CD8-positive, alpha-beta T cell (primary cell): ENCODE measurements at regions of chr17 and their contacts with region 1.

Region 1: GRCh38 chr17:49361902-49362722 is at the start of gene ZNF652:
- DNase-seq: peak; percentile 91 to 98 (median 95)
- ATAC-seq: peak; percentile 59
- H3K4me3 ChIP-seq: peak within 1 kb of the TSS; percentile 50 to 90
- H3K4me3 Mint-ChIP-seq: peak within 1 kb of the TSS; percentile 94
- H3K27ac ChIP-seq: peak within 1 kb of the TSS; percentile 58 to 75
- H3K27ac Mint-ChIP-seq: peak within 1 kb of the TSS; percentile 97
- H3K4me1 ChIP-seq: peaks cover 46% of the 10 kb centered on the region
- H3K4me1 Mint-ChIP-seq: peaks cover 68% of the 10 kb centered on the region
- H3K27me3 ChIP-seq: no peaks in the 10 kb centered on the region
- H3K27me3 Mint-ChIP-seq: no peaks in the 10 kb centered on the region
- CTCF ChIP-seq: no peak
- total RNA-seq, gene ZNF652: 28.1 to 28.6 TPM

Region 2: DNA sequence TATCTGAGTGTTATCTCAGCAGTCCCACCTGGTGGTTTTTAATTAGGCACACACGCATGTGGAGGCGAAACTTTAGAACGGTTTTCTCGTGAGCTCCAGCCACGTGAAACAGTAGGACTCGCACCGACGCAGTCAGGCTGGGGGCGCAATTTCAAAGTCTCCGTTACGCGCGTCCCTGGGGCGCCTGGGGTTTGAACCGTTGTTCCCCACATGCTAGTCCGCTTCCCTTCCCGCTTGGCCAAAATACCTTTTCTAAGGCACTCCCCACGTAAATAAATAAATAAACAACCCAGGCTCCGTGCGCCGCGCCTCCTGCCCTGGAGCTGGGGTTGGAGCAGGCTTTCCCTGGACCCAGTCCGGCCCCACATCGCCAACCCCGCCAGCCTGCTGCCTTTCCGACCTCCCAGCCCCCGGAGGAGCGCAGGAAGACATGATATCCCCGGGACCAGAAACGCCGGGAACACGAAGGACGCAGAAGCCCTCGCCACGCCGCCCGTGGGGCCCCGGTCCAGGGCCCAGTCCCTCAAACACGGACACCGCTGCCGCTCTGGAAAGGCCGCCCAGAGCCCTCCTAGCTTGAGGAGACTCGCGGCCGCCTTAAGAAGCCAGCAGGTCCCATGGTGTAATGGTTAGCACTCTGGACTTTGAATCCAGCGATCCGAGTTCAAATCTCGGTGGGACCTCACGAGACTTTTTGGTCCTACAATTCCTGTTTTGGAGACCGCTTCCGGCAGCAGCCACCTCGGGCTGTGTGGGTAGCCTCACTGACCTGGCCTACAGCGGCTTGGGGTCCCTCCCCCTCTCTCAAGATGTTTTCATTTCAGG is 170.0 kb before region 1 on chr17:
- CTCF ChIA-PET with region 1: interaction called, 3 read pairs
- POLR2A ChIA-PET with region 1: interaction called, 6 read pairs
- intact Hi-C with region 1: loop called (anchors 1 to 2 kb)
- DNase-seq: peak; percentile 86 to 99 (median 92)
- ATAC-seq: peak; percentile 48
- H3K4me3 ChIP-seq: peak overlapping the region; percentile 68 to 80
- H3K4me3 Mint-ChIP-seq: peak overlapping the region; percentile 97
- H3K27ac ChIP-seq: peak overlapping the region; percentile 82 to 93
- H3K27ac Mint-ChIP-seq: peak overlapping the region; percentile 100
- H3K4me1 ChIP-seq: peaks cover 11% of the 10 kb centered on the region
- H3K4me1 Mint-ChIP-seq: peaks cover 29% of the 10 kb centered on the region
- H3K27me3 ChIP-seq: no peaks in the 10 kb centered on the region
- H3K27me3 Mint-ChIP-seq: no peaks in the 10 kb centered on the region
- CTCF ChIP-seq: peak; percentile 46

Region 3: GRCh38 chr17:49224997-49225337 is 137.1 kb before region 1 on chr17:
- CTCF ChIA-PET with region 1: no interaction called
- POLR2A ChIA-PET with region 1: no interaction called
- intact Hi-C with region 1: no loop called
- DNase-seq: no peak
- ATAC-seq: no peak
- H3K4me3 ChIP-seq: peak overlapping the region; percentile 37 to 42
- H3K4me3 Mint-ChIP-seq: peak overlapping the region; percentile 76
- H3K27ac ChIP-seq: peak overlapping the region in 1 of 2 experiments; percentile 46
- H3K27ac Mint-ChIP-seq: peak overlapping the region; percentile 22
- H3K4me1 ChIP-seq: peaks cover 46% of the 10 kb centered on the region
- H3K4me1 Mint-ChIP-seq: peaks cover 40% of the 10 kb centered on the region
- H3K27me3 ChIP-seq: no peaks in the 10 kb centered on the region
- H3K27me3 Mint-ChIP-seq: no peaks in the 10 kb centered on the region
- CTCF ChIP-seq: no peak

Region 4: GRCh38 chr17:49337884-49338283 is 24.2 kb before region 1 on chr17:
- CTCF ChIA-PET with region 1: interaction called, 21 read pairs
- POLR2A ChIA-PET with region 1: interaction called, 42 read pairs
- intact Hi-C with region 1: loop called (anchors 1 kb)
- DNase-seq: peak in 1 of 9 experiments; percentile 21
- ATAC-seq: no peak
- H3K4me3 ChIP-seq: no peak overlapping the region
- H3K4me3 Mint-ChIP-seq: no peak overlapping the region
- H3K27ac ChIP-seq: no peak overlapping the region
- H3K27ac Mint-ChIP-seq: peak overlapping the region; percentile 25
- H3K4me1 ChIP-seq: peaks cover 39% of the 10 kb centered on the region
- H3K4me1 Mint-ChIP-seq: peaks cover 60% of the 10 kb centered on the region
- H3K27me3 ChIP-seq: no peaks in the 10 kb centered on the region
- H3K27me3 Mint-ChIP-seq: no peaks in the 10 kb centered on the region
- CTCF ChIP-seq: no peak

Region 5: GRCh38 chr17:49390548-49391324 is 28.6 kb after region 1 on chr17:
- CTCF ChIA-PET with region 1: interaction called, 24 read pairs
- POLR2A ChIA-PET with region 1: interaction called, 23 read pairs
- intact Hi-C with region 1: loop called in 1 of 2 experiments (anchors 1 kb)
- DNase-seq: peak in 2 of 9 experiments; percentile 12 to 51
- ATAC-seq: no peak
- H3K4me3 ChIP-seq: no peak overlapping the region
- H3K4me3 Mint-ChIP-seq: peak overlapping the region; percentile 65
- H3K27ac ChIP-seq: peak overlapping the region in 1 of 2 experiments; percentile 88
- H3K27ac Mint-ChIP-seq: peak overlapping the region; percentile 94
- H3K4me1 ChIP-seq: peaks cover 51% of the 10 kb centered on the region
- H3K4me1 Mint-ChIP-seq: peaks cover 68% of the 10 kb centered on the region
- H3K27me3 ChIP-seq: no peaks in the 10 kb centered on the region
- H3K27me3 Mint-ChIP-seq: no peaks in the 10 kb centered on the region
- CTCF ChIP-seq: no peak

Region 6: GRCh38 chr17:49482144-49482817 is 120.2 kb after region 1 on chr17:
- CTCF ChIA-PET with region 1: no interaction called
- POLR2A ChIA-PET with region 1: no interaction called
- intact Hi-C with region 1: no loop called
- DNase-seq: no peak
- ATAC-seq: no peak
- H3K4me3 ChIP-seq: no peak overlapping the region
- H3K4me3 Mint-ChIP-seq: no peak overlapping the region
- H3K27ac ChIP-seq: no peak overlapping the region
- H3K27ac Mint-ChIP-seq: no peak overlapping the region
- H3K4me1 ChIP-seq: peaks cover 11% of the 10 kb centered on the region
- H3K4me1 Mint-ChIP-seq: peaks cover 7% of the 10 kb centered on the region
- H3K27me3 ChIP-seq: peaks cover 0 to 7% of the 10 kb centered on the region in 2 experiments
- H3K27me3 Mint-ChIP-seq: peaks cover 51% of the 10 kb centered on the region
- CTCF ChIP-seq: no peak

Region 7: DNA sequence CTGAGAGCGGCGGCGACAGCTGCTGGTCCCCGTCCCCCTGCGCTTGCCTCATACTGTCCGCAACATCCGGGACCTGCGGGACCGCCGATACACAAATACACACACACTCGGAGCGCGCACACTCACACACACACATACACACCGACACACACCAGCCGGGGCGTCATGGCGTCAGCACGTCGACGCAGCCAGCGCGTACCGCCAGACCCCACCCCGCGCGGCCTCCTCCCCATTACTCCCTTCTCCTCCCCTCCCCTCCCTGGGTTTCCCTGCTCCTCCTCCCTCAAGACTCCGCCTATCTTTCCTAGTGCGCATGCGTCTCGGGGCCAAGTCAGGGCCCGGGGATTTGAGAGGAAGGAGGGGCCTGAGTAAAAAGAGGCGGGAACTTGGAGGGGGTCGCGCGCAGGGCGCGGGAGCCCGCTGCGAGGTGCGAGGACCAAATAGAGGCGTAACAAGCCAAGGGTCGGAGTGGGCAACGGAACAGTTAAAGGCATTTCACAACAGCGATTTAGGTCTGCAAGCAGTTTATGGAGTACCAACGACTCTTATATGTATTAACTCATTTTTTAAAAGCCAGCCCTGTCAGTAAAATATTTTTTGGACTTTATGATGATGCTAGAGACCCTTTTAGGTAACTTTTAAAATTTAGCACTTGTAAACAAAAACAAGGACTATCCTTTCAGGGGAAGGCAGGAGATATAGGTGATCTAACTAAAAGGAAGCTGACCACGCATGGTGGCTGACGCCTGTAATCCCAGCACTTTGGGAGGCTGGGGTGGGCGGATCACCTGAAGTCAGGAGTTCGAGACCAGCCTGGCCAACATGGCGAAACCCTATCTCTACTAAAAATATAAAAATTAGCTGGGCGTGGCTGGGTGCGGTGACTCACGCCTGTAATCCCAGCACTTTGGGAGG is 316.1 kb after region 1 on chr17 and contains the start of gene SPOP:
- CTCF ChIA-PET with region 1: no interaction called
- POLR2A ChIA-PET with region 1: no interaction called
- intact Hi-C with region 1: loop called (anchors 2 to 5 kb)
- DNase-seq: peak; percentile 97 to 100 (median 99)
- ATAC-seq: peak; percentile 94
- H3K4me3 ChIP-seq: peak within 1 kb of the TSS; percentile 76 to 81
- H3K4me3 Mint-ChIP-seq: peak within 1 kb of the TSS; percentile 97
- H3K27ac ChIP-seq: peak within 1 kb of the TSS; percentile 91 to 98
- H3K27ac Mint-ChIP-seq: peak within 1 kb of the TSS; percentile 100
- H3K4me1 ChIP-seq: peaks cover 29% of the 10 kb centered on the region
- H3K4me1 Mint-ChIP-seq: peaks cover 49% of the 10 kb centered on the region
- H3K27me3 ChIP-seq: no peaks in the 10 kb centered on the region
- H3K27me3 Mint-ChIP-seq: no peaks in the 10 kb centered on the region
- CTCF ChIP-seq: no peak
- total RNA-seq, gene SPOP: 30.5 to 34.3 TPM